Spleen (tissue), 13 donors: ENCODE measurements at regions of chr11 and their contacts with region 1.

Region 1: GRCh38 chr11:4187055-4187988 is 92.7 kb downstream of the RRM1 start:
- DNase-seq: peak; percentile 96
- H3K4me3 ChIP-seq: peak overlapping the region; percentile 30 to 82 (median 52)
- H3K27ac ChIP-seq: peak overlapping the region in 2 of 8 donors; percentile 47 to 53
- H3K4me1 ChIP-seq: peaks cover 2 to 15% (median 14%) of the 10 kb centered on the region in 6 donors
- H3K27me3 ChIP-seq: peaks cover 0 to 19% (median 0%) of the 10 kb centered on the region in 7 donors
- CTCF ChIP-seq: peak; percentile 88 to 99 (median 98)
- POLR2A ChIP-seq: no peak

Region 2: GRCh38 chr11:4493480-4493818 is 306.1 kb after region 1 on chr11:
- intact Hi-C with region 1: loop called (anchors 2 kb)
- DNase-seq: no peak
- H3K4me3 ChIP-seq: peak overlapping the region in 1 of 8 donors; percentile 29
- H3K27ac ChIP-seq: no peak overlapping the region
- H3K4me1 ChIP-seq: peaks cover 0 to 7% (median 4%) of the 10 kb centered on the region in 6 donors
- H3K27me3 ChIP-seq: peaks cover 0 to 7% (median 0%) of the 10 kb centered on the region in 7 donors
- CTCF ChIP-seq: peak in 3 of 11 experiments; percentile 4 to 64 (median 37)
- POLR2A ChIP-seq: no peak